PC-3 (cell line): ENCODE measurements at regions of chr15 and their contacts with region 1.

Region 1: DNA sequence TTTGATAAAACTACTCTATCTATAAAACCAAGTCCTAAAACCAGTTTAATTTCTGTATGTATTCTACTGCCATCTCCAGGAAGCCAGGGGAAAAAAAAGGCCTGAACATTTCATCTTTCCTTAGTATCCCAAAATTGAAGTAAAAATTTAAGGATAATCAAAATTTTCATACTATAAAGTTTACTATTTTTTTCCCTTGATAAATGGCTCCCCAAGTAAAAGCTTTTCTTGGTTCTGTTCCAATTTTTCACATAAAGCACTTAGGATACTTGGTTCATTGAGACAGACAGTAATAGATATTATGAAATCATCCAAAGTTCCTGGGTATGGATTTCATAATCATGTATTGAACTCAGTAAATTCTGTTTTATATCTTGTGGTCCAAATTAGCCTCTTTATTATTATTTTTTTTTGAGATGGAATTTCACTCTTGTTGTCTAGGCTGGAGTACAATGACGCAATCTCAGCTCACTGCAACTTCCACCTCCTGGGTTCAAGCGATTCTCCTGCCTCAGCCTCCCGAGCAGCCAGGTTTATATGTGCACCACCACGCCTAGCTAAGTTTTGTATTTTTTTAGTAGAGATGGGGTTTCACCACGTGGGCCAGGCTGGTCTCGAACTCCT is 34.5 kb downstream of the ICE2 start:
- DNase-seq: peak; percentile 45
- ATAC-seq: peak; percentile 40; the same call in 1 of the 2 replicates
- H3K4me3 ChIP-seq: no peak overlapping the region
- H3K27ac ChIP-seq: no peak overlapping the region
- H3K4me1 ChIP-seq: peaks cover 15% of the 10 kb centered on the region
- H3K27me3 ChIP-seq: no peaks in the 10 kb centered on the region
- CTCF ChIP-seq: peak; percentile 66

Region 2: DNA sequence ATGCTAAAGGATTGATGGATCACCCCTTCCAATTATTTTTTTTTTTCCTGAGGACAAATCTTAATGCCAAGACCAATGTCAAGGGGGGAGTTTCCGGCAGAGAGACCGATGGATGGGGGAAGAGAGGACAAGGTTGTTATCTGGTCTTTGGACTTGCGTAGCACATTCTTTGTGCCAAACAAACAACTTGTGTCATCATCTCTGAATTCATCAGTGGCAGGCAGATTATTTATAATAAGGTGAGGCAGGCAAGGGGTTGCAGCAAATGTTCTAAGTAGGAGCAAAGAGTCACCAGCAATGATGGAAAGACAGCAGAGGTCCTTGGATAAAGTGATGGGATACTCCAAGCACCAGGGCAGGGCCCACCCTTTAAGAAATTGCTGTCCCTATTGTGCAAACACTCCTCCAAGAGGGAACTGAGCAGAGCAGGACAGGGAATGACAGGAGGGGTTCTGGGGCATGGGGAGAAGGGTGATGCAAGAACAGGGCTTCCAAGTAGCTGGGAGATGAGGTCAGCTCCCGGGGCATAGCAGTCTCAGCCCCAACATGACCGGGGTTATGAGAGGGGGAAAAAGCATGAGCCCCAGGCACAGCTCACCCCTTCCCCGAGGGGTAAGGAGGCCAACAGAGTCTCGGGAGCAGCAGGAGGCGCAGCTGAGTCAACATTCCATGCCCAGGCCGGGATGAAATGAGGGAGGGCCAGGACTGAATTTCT is 104.0 kb before region 1 on chr15:
- CTCF ChIA-PET with region 1: no interaction called
- POLR2A ChIA-PET with region 1: no interaction called
- intact Hi-C with region 1: loop called (anchors 5 kb)
- DNase-seq: no peak
- ATAC-seq: no peak
- H3K4me3 ChIP-seq: no peak overlapping the region
- H3K27ac ChIP-seq: no peak overlapping the region
- H3K4me1 ChIP-seq: no peaks in the 10 kb centered on the region
- H3K27me3 ChIP-seq: no peaks in the 10 kb centered on the region
- CTCF ChIP-seq: no peak; the same call in 1 of the 2 replicates

Region 3: GRCh38 chr15:60358935-60359682 is 85.3 kb before region 1 on chr15:
- CTCF ChIA-PET with region 1: no interaction called
- POLR2A ChIA-PET with region 1: no interaction called
- intact Hi-C with region 1: loop called (anchors 1 kb)
- DNase-seq: no peak
- ATAC-seq: no peak
- H3K4me3 ChIP-seq: no peak overlapping the region
- H3K27ac ChIP-seq: peak overlapping the region; percentile 3; the same call in 1 of the 2 replicates
- H3K4me1 ChIP-seq: peaks cover 25% of the 10 kb centered on the region
- H3K27me3 ChIP-seq: no peaks in the 10 kb centered on the region
- CTCF ChIP-seq: no peak

Region 4: GRCh38 chr15:60374628-60375081 is 69.7 kb before region 1 on chr15:
- CTCF ChIA-PET with region 1: no interaction called
- POLR2A ChIA-PET with region 1: no interaction called
- intact Hi-C with region 1: loop called (anchors 1 kb)
- DNase-seq: peak; percentile 97
- ATAC-seq: peak; percentile 77
- H3K4me3 ChIP-seq: peak overlapping the region; percentile 38; the same call in 1 of the 2 replicates
- H3K27ac ChIP-seq: peak overlapping the region; percentile 98
- H3K4me1 ChIP-seq: peaks cover 91% of the 10 kb centered on the region
- H3K27me3 ChIP-seq: no peaks in the 10 kb centered on the region
- CTCF ChIP-seq: peak; percentile 34; the same call in 1 of the 2 replicates

Region 5: GRCh38 chr15:60478566-60479360 is 34.4 kb after region 1 on chr15 and contains the start of gene ICE2:
- CTCF ChIA-PET with region 1: no interaction called
- POLR2A ChIA-PET with region 1: no interaction called
- intact Hi-C with region 1: no loop called
- DNase-seq: peak; percentile 89
- ATAC-seq: peak; percentile 87
- H3K4me3 ChIP-seq: peak within 1 kb of the TSS; percentile 96
- H3K27ac ChIP-seq: peak within 1 kb of the TSS; percentile 82
- H3K4me1 ChIP-seq: peaks cover 33% of the 10 kb centered on the region
- H3K27me3 ChIP-seq: no peaks in the 10 kb centered on the region
- CTCF ChIP-seq: no peak
- total RNA-seq, gene ICE2: 14.8 and 23.7 TPM in 2 replicates